ENCODE measurements at regions of chr19 and their contacts with region 1.

Region 1: DNA sequence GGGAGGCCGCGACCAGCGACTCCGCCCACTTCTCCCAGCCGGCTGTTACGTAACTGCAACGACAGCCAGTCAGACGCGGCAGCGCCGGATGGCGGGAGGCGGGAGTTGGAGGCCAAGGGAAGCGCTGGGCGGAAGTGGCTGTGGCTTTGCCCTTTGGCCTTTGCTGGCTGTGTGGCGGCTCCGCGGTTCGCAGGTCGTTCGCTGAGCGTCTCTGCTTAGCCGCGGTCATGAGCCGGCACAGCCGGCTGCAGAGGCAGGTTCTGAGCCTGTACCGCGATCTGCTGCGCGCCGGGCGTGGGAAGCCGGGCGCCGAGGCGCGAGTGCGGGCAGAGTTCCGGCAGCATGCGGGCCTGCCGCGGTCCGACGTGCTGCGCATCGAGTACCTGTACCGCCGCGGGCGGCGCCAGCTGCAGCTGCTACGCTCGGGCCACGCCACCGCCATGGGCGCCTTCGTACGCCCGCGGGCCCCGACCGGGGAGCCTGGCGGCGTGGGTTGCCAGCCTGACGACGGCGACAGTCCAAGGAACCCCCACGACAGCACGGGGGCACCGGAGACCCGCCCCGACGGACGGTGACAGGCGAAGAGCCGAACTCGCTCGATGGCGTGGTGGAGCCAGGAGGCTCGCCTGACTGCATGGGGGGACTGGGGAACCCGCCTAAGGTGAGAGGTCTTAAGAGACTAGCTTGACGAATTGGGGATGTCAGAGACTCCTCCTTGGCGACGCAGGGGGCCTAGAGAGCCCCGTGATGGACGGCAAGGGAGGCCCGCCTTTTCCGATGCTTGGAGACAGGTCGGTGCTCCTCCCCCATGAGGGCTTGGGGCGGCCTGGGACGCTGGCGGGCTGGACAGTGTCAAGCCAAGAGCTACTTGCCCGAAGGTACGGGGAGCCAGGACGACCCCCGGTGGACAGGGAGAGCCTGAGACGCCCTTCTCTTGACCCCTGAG is at the start of gene SDHAF1:
- DNase-seq: peak; percentile 96 to 98
- H3K4me3 ChIP-seq: peak within 1 kb of the TSS; percentile 78 to 91
- H3K27ac ChIP-seq: peak within 1 kb of the TSS; percentile 84
- H3K4me1 ChIP-seq: peaks cover 0 to 46% (median 35%) of the 10 kb centered on the region in 4 donors
- H3K27me3 ChIP-seq: no peaks in the 10 kb centered on the region
- CTCF ChIP-seq: no peak

Region 2: DNA sequence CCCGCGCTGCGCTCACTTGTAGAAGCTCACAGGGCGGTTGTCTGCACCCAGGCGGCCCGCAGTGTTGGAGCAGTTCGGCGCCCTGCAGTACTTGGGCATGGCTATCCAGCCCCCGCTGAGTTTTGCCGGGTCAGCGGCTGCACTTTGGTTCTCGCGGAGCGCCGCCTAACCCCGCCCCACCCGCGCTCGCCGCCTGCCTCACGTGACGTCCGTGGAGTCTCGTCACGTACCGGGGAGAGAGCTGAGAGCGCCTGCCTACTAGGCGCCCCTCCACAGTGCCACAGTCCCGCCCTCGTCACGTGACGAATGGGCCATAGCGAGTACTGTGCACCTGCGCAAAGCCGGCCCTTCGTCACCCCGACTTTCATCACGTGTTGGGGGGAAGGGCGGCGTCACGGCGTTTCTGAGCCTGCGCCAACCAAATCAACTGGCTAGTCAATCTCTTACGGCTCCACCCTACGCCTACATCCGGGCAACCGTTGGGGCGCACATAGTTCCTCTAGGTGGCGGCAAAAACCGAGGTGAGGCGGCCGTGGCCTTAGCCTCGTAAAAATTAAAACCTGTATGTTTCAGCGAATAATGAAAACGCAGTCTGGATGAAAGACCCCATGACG is 58.9 kb after region 1 on chr19 and contains the start of gene THAP8:
- intact Hi-C with region 1: loop called (anchors 2 kb)
- DNase-seq: peak; percentile 100
- H3K4me3 ChIP-seq: peak within 1 kb of the TSS; percentile 56 to 67
- H3K27ac ChIP-seq: peak within 1 kb of the TSS; percentile 84 to 85
- H3K4me1 ChIP-seq: peaks cover 0 to 14% (median 8%) of the 10 kb centered on the region in 4 donors
- H3K27me3 ChIP-seq: no peaks in the 10 kb centered on the region
- CTCF ChIP-seq: peak; percentile 62 to 64

Region 3: DNA sequence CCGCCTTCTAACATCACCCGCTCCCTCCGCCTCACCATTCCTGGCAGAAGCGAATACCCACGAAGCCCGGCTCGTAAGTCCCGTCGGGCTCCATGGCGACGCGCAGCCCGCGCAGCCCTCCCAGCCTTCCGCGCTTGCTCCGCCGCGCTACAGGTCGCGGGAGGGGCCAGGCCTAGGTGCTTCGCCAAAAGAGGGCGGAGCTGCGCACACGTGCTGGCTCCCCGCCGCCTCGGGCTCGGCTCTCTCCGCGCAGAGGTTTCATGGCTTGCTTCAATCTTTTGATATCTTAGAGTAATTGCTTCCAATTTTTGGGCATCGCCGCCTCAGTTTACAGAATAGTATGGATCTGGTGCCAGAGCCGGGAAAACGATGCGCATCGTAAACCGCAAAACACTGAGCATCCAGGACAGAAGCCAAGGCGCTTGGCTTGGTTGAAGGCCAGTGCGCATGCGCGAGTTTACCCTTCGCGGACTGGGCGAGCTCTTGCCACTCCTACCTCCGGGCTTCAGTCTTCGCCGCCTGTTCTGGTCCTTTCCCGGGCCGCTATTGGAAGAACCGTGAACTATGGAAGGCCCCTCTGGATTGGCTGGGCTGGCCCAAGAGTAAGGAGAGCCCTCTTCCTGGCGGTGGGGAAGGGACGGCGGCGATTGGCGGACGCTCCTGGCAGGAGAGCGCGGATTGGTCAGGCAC is 119.6 kb after region 1 on chr19 and contains the start of gene POLR2I:
- intact Hi-C with region 1: loop called (anchors 5 kb)
- DNase-seq: peak; percentile 100
- H3K4me3 ChIP-seq: peak within 1 kb of the TSS; percentile 60 to 83
- H3K27ac ChIP-seq: peak within 1 kb of the TSS; percentile 84 to 86
- H3K4me1 ChIP-seq: peaks cover 0 to 26% (median 23%) of the 10 kb centered on the region in 4 donors
- H3K27me3 ChIP-seq: no peaks in the 10 kb centered on the region
- CTCF ChIP-seq: peak in 1 of 2 experiments; percentile 15

Region 4: DNA sequence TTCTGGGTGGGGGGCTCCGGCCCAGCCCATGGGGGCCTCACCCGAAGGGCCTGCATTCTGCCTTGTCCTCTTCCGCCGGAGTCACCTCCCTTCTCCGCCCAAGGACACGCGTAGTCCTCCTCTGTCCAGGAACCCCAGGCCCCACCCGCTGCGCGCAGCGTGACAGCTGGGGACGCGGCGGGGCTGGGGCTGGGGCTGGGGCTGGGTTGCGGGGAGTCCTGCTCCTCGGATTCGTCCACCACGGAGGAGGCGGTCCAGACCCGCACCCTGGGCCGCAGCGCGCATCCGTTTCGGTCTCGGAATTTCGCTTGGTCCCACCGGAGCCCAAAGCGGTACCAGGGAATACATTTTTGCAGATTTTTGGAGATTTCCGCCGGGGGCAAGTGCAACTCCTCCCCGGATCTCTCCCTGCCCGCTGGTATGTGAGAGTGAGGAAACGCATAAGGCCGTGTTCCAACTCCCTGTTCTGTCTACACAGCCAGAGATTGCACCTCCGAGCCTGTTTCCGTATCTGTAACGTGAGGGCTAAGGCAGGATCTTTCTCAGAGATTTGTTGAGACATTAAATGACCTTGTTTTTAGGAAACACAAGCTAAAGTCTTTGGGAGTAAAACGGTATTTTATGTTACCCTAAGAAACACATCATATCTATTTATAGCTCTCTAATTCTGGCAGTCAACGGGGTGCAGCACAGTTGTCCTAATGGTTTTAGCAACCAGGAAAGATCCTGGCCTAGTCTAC is 157.2 kb after region 1 on chr19 and contains the start of gene COX7A1:
- intact Hi-C with region 1: loop called (anchors 10 kb)
- DNase-seq: peak; percentile 85 to 93
- H3K4me3 ChIP-seq: peak within 1 kb of the TSS; percentile 68 to 82
- H3K27ac ChIP-seq: peak within 1 kb of the TSS; percentile 99 to 100
- H3K4me1 ChIP-seq: peaks cover 0 to 30% (median 23%) of the 10 kb centered on the region in 4 donors
- H3K27me3 ChIP-seq: no peaks in the 10 kb centered on the region
- CTCF ChIP-seq: no peak